ENCODE measurements at regions of chr18 and their contacts with region 1.

Region 1: DNA sequence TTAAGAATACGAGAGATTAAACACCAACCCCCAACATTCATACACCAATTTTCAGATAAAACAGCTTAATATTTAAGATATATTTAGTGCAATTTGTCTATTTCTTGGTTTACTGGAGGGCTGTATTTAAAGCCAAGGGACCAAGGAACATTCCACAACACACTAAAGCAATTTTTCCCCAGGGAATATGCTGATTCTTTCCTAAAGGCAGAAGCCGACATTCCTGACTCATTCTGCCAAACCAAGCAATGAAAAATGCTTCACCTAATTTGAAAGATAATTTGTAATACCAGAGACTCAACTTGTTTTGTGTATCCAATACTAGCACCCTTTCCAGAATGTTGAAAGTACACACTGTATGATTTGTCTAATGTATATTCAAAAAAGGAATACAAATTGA is 1267.6 kb upstream of the PIK3C3 start:
- DNase-seq: no peak
- H3K4me3 ChIP-seq: no peak overlapping the region
- H3K27ac ChIP-seq: no peak overlapping the region
- H3K4me1 ChIP-seq: no peaks in the 10 kb centered on the region
- H3K27me3 ChIP-seq: no peaks in the 10 kb centered on the region
- CTCF ChIP-seq: no peak

Region 2: GRCh38 chr18:40582105-40582504 is 105.3 kb before region 1 on chr18:
- CTCF ChIA-PET with region 1: no interaction called
- POLR2A ChIA-PET with region 1: no interaction called
- intact Hi-C with region 1: no loop called
- DNase-seq: no peak
- H3K4me3 ChIP-seq: no peak overlapping the region
- H3K27ac ChIP-seq: no peak overlapping the region
- H3K4me1 ChIP-seq: no peaks in the 10 kb centered on the region
- H3K27me3 ChIP-seq: no peaks in the 10 kb centered on the region
- CTCF ChIP-seq: no peak

Region 3: GRCh38 chr18:40676668-40677067 is 10.7 kb before region 1 on chr18:
- CTCF ChIA-PET with region 1: no interaction called
- POLR2A ChIA-PET with region 1: no interaction called
- intact Hi-C with region 1: loop called (anchors 1 kb)
- DNase-seq: no peak
- H3K4me3 ChIP-seq: no peak overlapping the region
- H3K27ac ChIP-seq: no peak overlapping the region
- H3K4me1 ChIP-seq: no peaks in the 10 kb centered on the region
- H3K27me3 ChIP-seq: no peaks in the 10 kb centered on the region
- CTCF ChIP-seq: no peak